Breast epithelium (tissue), 4 donors: ENCODE measurements at regions of chr5 and their contacts with region 1.

Region 1: DNA sequence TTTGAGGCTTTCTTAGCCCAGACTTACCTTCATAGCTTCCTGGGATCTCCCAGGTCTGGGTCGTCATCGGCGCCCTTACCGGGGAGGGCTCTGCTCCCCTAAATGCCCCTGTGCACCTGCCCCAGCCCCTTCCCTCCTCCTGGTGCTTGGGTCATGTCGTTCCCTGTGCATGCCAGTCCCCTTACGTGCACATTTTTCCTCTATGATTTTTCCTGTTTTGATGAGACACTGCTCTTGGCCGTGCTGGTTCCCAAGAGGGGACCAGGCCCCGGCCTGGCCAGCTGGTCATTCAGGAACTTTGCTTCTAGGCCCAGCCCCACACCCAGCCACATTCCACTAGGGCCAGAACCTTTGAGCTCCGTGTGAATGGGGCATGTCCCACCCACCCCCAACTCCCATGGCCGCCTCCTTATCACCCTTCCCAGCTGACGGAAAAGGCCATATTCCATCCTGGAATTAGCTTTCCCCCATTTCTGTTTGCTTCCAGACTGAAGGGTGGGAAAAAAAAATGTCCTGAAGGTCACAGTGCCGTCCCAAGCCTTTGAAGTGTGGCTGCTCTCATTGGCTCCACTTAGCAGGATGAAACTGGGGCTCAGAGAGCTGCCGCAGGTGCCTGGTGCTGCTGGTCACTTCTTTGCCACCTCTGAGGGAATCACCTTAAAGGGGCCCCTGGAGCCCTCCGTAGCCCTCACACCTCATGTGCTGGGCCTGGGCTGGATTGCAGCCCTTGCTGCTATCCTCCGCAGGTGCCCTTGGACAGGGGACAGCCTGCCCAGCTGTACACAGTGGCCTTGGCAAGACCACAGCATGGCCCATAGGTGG is 25.1 kb downstream of the ERGIC1 start:
- DNase-seq: no peak
- H3K4me3 ChIP-seq: no peak overlapping the region
- H3K27ac ChIP-seq: peak overlapping the region; percentile 77 to 91
- H3K4me1 ChIP-seq: peaks cover 34 to 49% of the 10 kb centered on the region in 2 donors
- H3K27me3 ChIP-seq: no peaks in the 10 kb centered on the region
- CTCF ChIP-seq: no peak
- POLR2A ChIP-seq: no peak

Region 2: DNA sequence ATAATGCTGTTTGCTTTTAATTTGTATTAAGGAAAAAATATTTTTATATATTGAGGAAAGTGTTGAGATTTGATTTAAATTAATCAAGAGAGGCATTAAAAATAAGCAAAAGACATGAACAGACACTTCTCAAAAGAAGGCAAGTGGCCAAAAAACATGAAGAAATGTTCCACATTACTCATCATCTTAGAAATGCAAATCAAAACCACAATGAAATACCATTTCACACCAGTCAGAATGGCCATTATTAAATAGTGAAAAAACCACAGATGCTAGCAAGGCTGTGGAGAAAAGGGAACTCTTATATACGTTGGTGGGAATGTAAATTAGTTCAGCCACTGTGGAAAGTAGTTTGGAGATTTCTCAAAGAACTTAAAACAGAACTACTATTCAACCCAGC is 1951.4 kb before region 1 on chr5:
- intact Hi-C with region 1: no loop called
- DNase-seq: no peak
- H3K4me3 ChIP-seq: no peak overlapping the region
- H3K27ac ChIP-seq: no peak overlapping the region
- H3K4me1 ChIP-seq: no peaks in the 10 kb centered on the region
- H3K27me3 ChIP-seq: no peaks in the 10 kb centered on the region
- CTCF ChIP-seq: no peak
- POLR2A ChIP-seq: no peak

Region 3: GRCh38 chr5:172806897-172807672 is 52.1 kb before region 1 on chr5:
- intact Hi-C with region 1: no loop called
- DNase-seq: peak; percentile 74 to 75
- H3K4me3 ChIP-seq: peak overlapping the region; percentile 24 to 51 (median 33)
- H3K27ac ChIP-seq: peak overlapping the region; percentile 80 to 83
- H3K4me1 ChIP-seq: no peaks in the 10 kb centered on the region
- H3K27me3 ChIP-seq: no peaks in the 10 kb centered on the region
- CTCF ChIP-seq: no peak
- POLR2A ChIP-seq: no peak

Region 4: DNA sequence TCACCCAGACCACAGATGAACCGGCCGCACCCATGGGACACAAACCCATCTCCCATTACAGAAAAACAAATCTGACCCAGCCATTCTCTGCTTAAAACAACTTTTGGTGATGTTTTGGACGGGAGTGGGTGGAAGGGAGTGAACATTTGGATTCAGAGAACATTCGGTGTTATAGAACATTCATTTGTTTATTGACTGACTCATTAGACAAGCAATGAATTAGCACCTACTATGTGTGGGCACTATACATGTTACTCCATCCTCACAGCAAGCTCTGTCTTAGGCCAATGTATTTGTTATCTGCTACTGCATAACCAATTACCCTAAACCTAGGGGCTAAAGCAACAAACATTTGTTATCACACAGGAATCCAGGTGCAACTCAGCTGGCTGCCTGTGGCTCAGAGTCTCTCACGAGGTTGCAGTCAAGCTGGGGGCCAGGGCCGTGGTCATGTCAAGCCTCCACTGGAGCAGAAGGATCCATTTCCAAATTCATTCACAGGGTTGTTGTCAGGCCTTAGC is 30.2 kb before region 1 on chr5:
- intact Hi-C with region 1: loop called (anchors 1 kb)
- DNase-seq: no peak
- H3K4me3 ChIP-seq: no peak overlapping the region
- H3K27ac ChIP-seq: no peak overlapping the region
- H3K4me1 ChIP-seq: no peaks in the 10 kb centered on the region
- H3K27me3 ChIP-seq: no peaks in the 10 kb centered on the region
- CTCF ChIP-seq: no peak
- POLR2A ChIP-seq: no peak